Panc1 (cell line): ENCODE measurements at regions of chr1 and their contacts with region 1.

Region 1: DNA sequence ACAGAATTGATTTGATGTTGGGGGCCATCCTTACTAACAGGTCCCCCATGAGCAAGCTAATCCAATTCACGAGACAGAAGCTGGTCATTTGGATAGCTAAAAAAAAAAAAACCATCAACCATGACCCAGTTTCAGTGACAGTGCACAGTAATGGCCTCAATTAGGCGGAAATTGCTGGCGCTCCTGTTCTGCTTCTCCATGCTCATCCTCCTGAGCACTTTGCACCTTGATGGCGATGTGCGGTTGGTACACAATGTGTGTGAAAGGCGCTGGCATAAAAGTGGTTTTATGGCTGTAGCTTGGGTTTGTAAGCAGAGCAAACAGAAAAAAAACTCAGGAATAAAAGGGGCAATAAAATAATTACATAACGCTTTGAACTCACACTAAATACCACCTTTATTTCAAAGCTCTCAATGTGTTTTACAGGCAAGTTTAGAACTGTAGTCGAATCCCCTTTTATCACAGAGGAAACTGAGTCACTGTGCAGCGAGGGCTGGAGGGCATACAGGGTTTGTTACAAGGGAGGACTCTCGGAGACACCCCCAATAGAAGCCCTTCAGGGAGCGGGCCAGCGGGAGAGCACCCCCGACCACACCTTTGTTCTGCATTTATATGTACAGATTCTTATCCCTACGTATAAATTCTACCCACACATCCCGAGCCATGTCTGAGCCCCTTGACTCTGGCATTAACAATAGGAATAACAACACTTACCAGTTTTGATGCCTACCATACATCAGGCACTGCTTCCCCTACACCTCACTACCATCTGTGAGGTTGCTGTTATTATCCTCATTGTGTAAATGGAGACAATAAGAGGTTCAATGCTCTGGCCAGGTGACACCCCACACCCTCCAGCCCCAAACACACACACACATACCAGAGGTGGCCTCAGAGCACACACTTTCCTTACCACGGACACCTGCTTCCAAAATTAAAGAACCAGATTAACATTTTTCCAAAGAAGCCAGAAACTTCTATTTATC is 213.5 kb upstream of the IRF2BP2 start:
- DNase-seq: no peak
- ATAC-seq: 0 out of 2 replicates have a peak, but pooled peaks have one; percentile 23
- H3K4me3 ChIP-seq: no peak overlapping the region
- H3K27ac ChIP-seq: peak overlapping the region; percentile 86
- H3K4me1 ChIP-seq: peaks cover 10% of the 10 kb centered on the region; the same call in 1 of the 2 replicates
- H3K27me3 ChIP-seq: no peaks in the 10 kb centered on the region
- CTCF ChIP-seq: no peak

Region 2: DNA sequence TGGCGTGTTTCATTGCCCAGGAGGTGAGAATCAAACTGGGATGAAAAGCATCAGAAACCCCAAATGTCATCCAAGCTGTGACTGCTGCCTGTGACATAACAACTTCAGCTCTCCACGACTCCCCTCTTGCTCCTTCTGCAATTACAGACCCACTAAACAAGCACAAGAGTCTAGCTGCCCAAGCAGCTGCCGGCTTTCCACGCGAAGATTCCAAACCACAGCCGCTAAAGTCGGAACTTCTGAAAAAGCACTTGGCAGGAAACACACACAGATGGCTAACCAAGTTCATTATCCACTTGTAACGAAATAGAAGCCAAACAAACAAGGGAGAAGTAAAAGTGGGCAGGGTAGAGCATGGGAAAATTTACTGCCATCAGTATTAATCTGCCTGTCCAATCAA is 720.9 kb before region 1 on chr1:
- CTCF ChIA-PET with region 1: no interaction called
- POLR2A ChIA-PET with region 1: interaction called, 10 read pairs
- in situ Hi-C with region 1: no loop called
- intact Hi-C with region 1: no loop called
- DNase-seq: no peak
- ATAC-seq: no peak
- H3K4me3 ChIP-seq: no peak overlapping the region
- H3K27ac ChIP-seq: no peak overlapping the region
- H3K4me1 ChIP-seq: peaks cover 1% of the 10 kb centered on the region
- H3K27me3 ChIP-seq: no peaks in the 10 kb centered on the region
- CTCF ChIP-seq: no peak

Region 3: GRCh38 chr1:234683861-234684632 is 139.4 kb before region 1 on chr1:
- CTCF ChIA-PET with region 1: no interaction called
- POLR2A ChIA-PET with region 1: no interaction called
- in situ Hi-C with region 1: no loop called
- intact Hi-C with region 1: no loop called
- DNase-seq: peak; percentile 64
- ATAC-seq: peak; percentile 98
- H3K4me3 ChIP-seq: no peak overlapping the region
- H3K27ac ChIP-seq: peak overlapping the region; percentile 65
- H3K4me1 ChIP-seq: peaks cover 6% of the 10 kb centered on the region
- H3K27me3 ChIP-seq: no peaks in the 10 kb centered on the region
- CTCF ChIP-seq: no peak

Region 4: GRCh38 chr1:234715252-234716014 is 108.1 kb before region 1 on chr1:
- CTCF ChIA-PET with region 1: no interaction called
- POLR2A ChIA-PET with region 1: interaction called, 12 read pairs
- in situ Hi-C with region 1: no loop called
- intact Hi-C with region 1: no loop called
- DNase-seq: no peak
- ATAC-seq: no peak
- H3K4me3 ChIP-seq: no peak overlapping the region
- H3K27ac ChIP-seq: peak overlapping the region; percentile 95
- H3K4me1 ChIP-seq: peaks cover 41% of the 10 kb centered on the region
- H3K27me3 ChIP-seq: no peaks in the 10 kb centered on the region
- CTCF ChIP-seq: no peak

Region 5: DNA sequence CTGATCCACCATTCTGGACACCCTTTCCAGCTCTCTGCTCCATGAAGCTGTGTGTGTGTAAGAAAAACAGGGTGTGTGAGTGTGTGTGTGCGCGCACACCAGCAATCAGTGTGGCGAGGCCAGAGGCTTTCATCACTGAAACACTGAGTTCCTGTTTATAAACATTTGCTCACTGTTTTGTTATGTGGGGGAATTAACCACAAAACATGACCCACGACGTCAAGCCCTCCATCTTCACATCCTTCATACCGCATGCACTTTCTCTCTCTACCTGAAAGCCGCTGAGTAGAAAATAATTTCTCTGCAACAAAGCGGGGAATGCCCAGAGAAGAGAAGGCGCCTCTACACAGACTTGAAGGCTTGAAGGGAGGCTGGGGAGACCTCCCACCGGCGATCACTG is 64.6 kb before region 1 on chr1:
- CTCF ChIA-PET with region 1: no interaction called
- POLR2A ChIA-PET with region 1: interaction called, 23 read pairs
- in situ Hi-C with region 1: no loop called
- intact Hi-C with region 1: no loop called
- DNase-seq: no peak
- ATAC-seq: no peak
- H3K4me3 ChIP-seq: no peak overlapping the region
- H3K27ac ChIP-seq: peak overlapping the region; percentile 76; the same call in 1 of the 2 replicates
- H3K4me1 ChIP-seq: peaks cover 10% of the 10 kb centered on the region
- H3K27me3 ChIP-seq: no peaks in the 10 kb centered on the region
- CTCF ChIP-seq: no peak